ENCODE measurements at regions of chr15 and their contacts with region 1.

Region 1: GRCh38 chr15:66955871-66956585 is 109.4 kb upstream of the SMAD3 start:
- DNase-seq: no peak
- ATAC-seq: no peak
- H3K4me3 ChIP-seq: no peak overlapping the region
- H3K4me3 Mint-ChIP-seq: no peak overlapping the region
- H3K27ac ChIP-seq: no peak overlapping the region
- H3K27ac Mint-ChIP-seq: no peak overlapping the region
- H3K4me1 ChIP-seq: no peaks in the 10 kb centered on the region
- H3K4me1 Mint-ChIP-seq: peaks cover 0 to 14% (median 0%) of the 10 kb centered on the region in 7 donors
- H3K27me3 ChIP-seq: no peaks in the 10 kb centered on the region
- H3K27me3 Mint-ChIP-seq: peaks cover 0 to 17% (median 4%) of the 10 kb centered on the region in 5 donors

Region 2: DNA sequence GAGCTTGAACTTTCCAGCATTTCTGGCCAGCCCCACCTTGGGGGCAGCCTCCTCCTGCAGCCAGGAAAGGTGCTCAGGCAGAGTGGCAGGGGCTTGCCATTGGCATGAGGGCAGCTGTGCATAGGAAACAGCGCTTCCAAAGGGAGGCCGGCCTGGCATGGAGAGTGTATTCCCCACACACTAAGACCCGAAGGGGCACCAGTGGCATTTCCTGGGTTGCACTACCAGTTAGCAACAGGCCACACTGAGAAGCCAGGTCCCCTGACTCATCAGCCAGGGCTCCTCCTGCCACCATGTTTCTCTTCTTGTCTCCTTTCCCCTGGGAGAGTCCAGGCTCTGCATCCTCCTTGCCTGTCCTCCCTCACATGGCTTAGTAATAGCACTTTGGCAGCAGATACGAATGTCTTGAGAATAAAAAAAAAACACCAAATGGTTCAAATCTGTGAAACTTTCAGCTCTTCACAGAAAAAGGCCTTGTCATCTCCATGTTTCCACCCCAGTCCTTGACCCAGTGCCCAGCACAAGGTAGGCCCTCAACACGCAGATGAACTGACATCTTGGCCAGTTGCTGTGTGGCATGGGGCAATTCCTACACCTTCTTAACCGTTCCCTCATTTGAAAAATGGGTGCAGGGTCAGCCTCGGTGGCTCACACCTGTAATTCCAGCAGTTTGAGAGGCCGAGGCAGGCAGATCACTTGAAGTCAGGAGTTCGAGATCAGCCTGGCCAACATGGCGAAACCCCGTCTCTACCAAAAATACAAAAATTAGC is 73.6 kb before region 1 on chr15:
- CTCF ChIA-PET with region 1: no interaction called
- POLR2A ChIA-PET with region 1: no interaction called
- intact Hi-C with region 1: no loop called
- DNase-seq: peak in 1 of 9 donors; percentile 13
- ATAC-seq: no peak
- H3K4me3 ChIP-seq: no peak overlapping the region
- H3K4me3 Mint-ChIP-seq: no peak overlapping the region
- H3K27ac ChIP-seq: no peak overlapping the region
- H3K27ac Mint-ChIP-seq: no peak overlapping the region
- H3K4me1 ChIP-seq: no peaks in the 10 kb centered on the region
- H3K4me1 Mint-ChIP-seq: no peaks in the 10 kb centered on the region
- H3K27me3 ChIP-seq: no peaks in the 10 kb centered on the region
- H3K27me3 Mint-ChIP-seq: peaks cover 0 to 4% (median 3%) of the 10 kb centered on the region in 5 donors

Region 3: GRCh38 chr15:66938114-66938830 is 17.8 kb before region 1 on chr15:
- CTCF ChIA-PET with region 1: no interaction called
- POLR2A ChIA-PET with region 1: no interaction called
- intact Hi-C with region 1: no loop called
- DNase-seq: no peak
- ATAC-seq: no peak
- H3K4me3 ChIP-seq: no peak overlapping the region
- H3K4me3 Mint-ChIP-seq: no peak overlapping the region
- H3K27ac ChIP-seq: no peak overlapping the region
- H3K27ac Mint-ChIP-seq: no peak overlapping the region
- H3K4me1 ChIP-seq: no peaks in the 10 kb centered on the region
- H3K4me1 Mint-ChIP-seq: peaks cover 0 to 11% (median 0%) of the 10 kb centered on the region in 7 donors
- H3K27me3 ChIP-seq: no peaks in the 10 kb centered on the region
- H3K27me3 Mint-ChIP-seq: peaks cover 0 to 21% (median 9%) of the 10 kb centered on the region in 5 donors

Region 4: DNA sequence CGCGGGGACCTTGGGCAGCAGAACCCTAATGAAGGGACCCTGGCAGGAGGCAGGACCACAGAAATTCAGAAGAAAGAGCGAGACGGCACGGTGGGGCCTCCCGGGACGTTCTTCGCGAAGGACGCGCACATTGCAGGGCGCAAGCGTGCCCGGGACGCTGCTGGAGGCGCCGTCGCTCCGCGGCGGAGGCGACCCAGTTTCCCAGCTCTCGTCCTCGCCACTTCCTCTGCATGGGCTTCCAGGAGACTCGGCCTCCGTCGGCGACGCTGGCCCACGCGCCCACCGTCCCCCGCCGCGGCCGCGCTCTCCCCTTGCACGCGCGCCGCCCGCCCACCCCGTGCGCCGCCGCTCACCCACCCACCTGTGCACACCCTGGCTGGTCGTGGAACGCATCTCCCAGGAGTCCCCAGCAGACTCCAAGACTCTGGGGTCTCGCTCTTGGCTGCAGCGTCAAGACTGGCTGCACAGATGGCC is 77.6 kb after region 1 on chr15:
- CTCF ChIA-PET with region 1: no interaction called
- POLR2A ChIA-PET with region 1: no interaction called
- intact Hi-C with region 1: loop called in 1 of 2 experiments (anchors 10 kb)
- DNase-seq: peak in 6 of 9 donors; percentile 10 to 35 (median 24)
- ATAC-seq: peak; percentile 56
- H3K4me3 ChIP-seq: peak overlapping the region; percentile 41
- H3K4me3 Mint-ChIP-seq: peak overlapping the region in 6 of 10 donors; percentile 30 to 75 (median 68)
- H3K27ac ChIP-seq: no peak overlapping the region
- H3K27ac Mint-ChIP-seq: peak overlapping the region in 3 of 9 donors; percentile 20 to 41 (median 20)
- H3K4me1 ChIP-seq: peaks cover 4 to 12% of the 10 kb centered on the region in 2 donors
- H3K4me1 Mint-ChIP-seq: peaks cover 3 to 24% (median 14%) of the 10 kb centered on the region in 7 donors
- H3K27me3 ChIP-seq: no peaks in the 10 kb centered on the region
- H3K27me3 Mint-ChIP-seq: peaks cover 0 to 16% (median 0%) of the 10 kb centered on the region in 5 donors